ENCODE measurements at regions of chr22 and their contacts with region 1.

Region 1: DNA sequence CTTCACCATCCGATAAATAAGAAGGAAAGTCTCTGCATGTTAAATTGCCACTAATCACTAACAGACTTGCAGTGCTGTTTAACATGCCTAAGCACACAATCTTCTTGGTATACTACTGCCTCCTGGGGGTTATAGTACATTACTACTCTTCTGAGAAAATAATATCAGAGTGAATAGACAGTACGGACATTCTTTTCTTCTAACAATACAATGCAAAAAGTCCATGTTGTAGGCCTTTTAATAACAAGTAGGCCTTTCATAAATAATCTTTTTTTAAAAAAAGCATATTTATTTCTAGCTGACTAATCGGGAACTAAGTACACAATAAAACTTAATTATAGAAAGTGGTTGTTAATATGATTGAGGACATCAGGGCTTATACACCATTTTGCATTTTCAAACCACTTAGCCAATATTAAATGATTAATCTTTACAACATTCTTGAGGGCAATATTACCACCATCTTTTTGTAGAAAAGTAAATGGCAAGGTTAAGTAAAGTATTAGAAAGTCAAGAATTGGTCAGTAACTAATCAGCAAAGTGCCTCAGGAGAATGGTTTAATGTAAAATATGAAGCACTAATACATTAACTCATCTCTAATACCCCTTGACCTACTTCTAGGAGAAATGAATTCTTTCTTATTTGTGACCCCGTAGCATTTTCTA is 84.7 kb downstream of the TTC28 start:
- DNase-seq: peak; percentile 61
- ATAC-seq: peak; percentile 75
- H3K4me3 ChIP-seq: no peak overlapping the region
- H3K27ac ChIP-seq: 0 out of 2 replicates have a peak overlapping the region, but pooled peaks have one; percentile 10
- H3K4me1 ChIP-seq: peaks cover 15% of the 10 kb centered on the region
- H3K27me3 ChIP-seq: no peaks in the 10 kb centered on the region
- CTCF ChIP-seq: peak; percentile 76

Region 2: DNA sequence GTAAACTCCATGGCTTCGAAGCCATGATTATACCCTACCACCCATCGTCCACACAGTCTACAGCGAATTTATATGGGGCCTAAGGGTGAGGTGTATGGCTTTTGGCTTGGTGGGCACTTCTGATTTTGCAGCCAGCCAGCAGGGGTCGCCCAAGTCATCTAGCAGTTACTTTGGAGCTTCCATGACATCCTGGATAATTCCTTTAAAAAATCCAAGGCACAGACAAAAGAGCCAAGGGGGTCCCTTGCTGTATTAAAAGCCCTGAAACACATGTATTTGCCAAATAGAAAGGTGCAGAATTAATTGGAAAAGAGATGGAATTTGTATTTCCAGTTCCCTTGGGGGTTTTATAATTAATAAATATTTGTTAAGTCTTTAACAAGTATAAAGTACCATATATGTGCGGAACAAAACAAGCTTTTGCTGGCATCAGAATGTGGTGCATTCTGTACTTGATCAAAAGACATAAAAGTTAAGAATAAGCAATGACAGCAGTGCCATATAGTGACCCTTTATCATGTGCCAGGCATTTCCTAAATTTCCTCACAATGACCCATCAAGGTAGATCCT is 543.1 kb before region 1 on chr22:
- CTCF ChIA-PET with region 1: no interaction called
- POLR2A ChIA-PET with region 1: no interaction called
- intact Hi-C with region 1: loop called (anchors 1 kb)
- DNase-seq: peak; percentile 63
- ATAC-seq: peak; percentile 20; the same call in 1 of the 2 replicates
- H3K4me3 ChIP-seq: no peak overlapping the region
- H3K27ac ChIP-seq: no peak overlapping the region
- H3K4me1 ChIP-seq: no peaks in the 10 kb centered on the region
- H3K27me3 ChIP-seq: no peaks in the 10 kb centered on the region
- CTCF ChIP-seq: peak; percentile 80

Region 3: GRCh38 chr22:28247667-28248363 is 347.1 kb before region 1 on chr22:
- CTCF ChIA-PET with region 1: interaction called, 4 read pairs
- POLR2A ChIA-PET with region 1: no interaction called
- intact Hi-C with region 1: loop called (anchors 1 kb)
- DNase-seq: no peak
- ATAC-seq: no peak
- H3K4me3 ChIP-seq: no peak overlapping the region
- H3K27ac ChIP-seq: no peak overlapping the region
- H3K4me1 ChIP-seq: no peaks in the 10 kb centered on the region
- H3K27me3 ChIP-seq: no peaks in the 10 kb centered on the region
- CTCF ChIP-seq: no peak

Region 4: DNA sequence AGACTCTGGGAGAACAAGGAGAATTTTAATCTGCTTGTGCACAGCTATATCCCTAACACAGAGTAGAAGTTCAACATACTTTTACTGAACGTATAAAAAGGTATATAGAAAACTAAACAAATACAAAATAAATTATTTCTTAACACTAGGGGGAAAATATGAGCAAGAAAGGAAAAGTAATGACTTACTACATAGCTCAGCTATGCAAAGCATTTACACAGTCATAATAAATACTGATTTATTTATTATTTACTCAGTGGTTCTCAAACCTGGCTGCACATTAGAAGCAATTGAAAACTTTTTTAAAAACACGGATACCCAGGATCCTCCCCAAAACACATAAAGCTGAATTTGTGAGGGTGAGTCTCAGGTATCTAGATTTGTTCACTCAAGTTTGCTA is 97.7 kb before region 1 on chr22:
- CTCF ChIA-PET with region 1: no interaction called
- POLR2A ChIA-PET with region 1: no interaction called
- intact Hi-C with region 1: loop called (anchors 5 kb)
- DNase-seq: peak; percentile 31
- ATAC-seq: peak; percentile 88
- H3K4me3 ChIP-seq: no peak overlapping the region
- H3K27ac ChIP-seq: no peak overlapping the region
- H3K4me1 ChIP-seq: peaks cover 3% of the 10 kb centered on the region; the same call in 1 of the 2 replicates
- H3K27me3 ChIP-seq: no peaks in the 10 kb centered on the region
- CTCF ChIP-seq: no peak

Region 5: DNA sequence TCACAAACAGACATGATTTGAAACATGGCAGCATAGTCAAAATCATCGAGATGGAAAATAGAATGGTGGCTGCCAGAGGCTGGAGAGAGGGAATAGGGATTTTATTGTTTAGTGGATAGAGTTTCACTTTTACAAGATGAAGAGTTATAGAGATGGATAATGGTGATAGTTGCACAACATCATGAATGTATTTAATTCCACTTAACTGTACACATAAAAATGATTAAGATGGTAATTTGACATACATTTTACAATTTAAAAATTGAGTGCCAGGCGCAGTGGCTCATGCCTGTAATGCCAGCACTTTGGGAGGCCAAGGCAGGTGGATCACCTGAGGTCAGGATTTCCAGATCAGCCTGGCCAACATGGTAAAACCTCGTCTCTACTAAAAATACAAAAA is 63.5 kb after region 1 on chr22:
- CTCF ChIA-PET with region 1: no interaction called
- POLR2A ChIA-PET with region 1: no interaction called
- intact Hi-C with region 1: no loop called
- DNase-seq: no peak
- ATAC-seq: no peak
- H3K4me3 ChIP-seq: no peak overlapping the region
- H3K27ac ChIP-seq: no peak overlapping the region
- H3K4me1 ChIP-seq: peaks cover 3% of the 10 kb centered on the region; the same call in 1 of the 2 replicates
- H3K27me3 ChIP-seq: no peaks in the 10 kb centered on the region
- CTCF ChIP-seq: no peak

Region 6: GRCh38 chr22:28864878-28865596 is 270.1 kb after region 1 on chr22:
- CTCF ChIA-PET with region 1: no interaction called
- POLR2A ChIA-PET with region 1: no interaction called
- intact Hi-C with region 1: no loop called
- DNase-seq: no peak
- ATAC-seq: no peak
- H3K4me3 ChIP-seq: no peak overlapping the region
- H3K27ac ChIP-seq: no peak overlapping the region
- H3K4me1 ChIP-seq: no peaks in the 10 kb centered on the region
- H3K27me3 ChIP-seq: no peaks in the 10 kb centered on the region
- CTCF ChIP-seq: no peak

Measured in PC-3 (cell line).